ENCODE measurements at regions of chr6 and their contacts with region 1.

Region 1: GRCh38 chr6:27838058-27838944 is 73.9 kb downstream of the OR2B2 start:
- DNase-seq: peak; percentile 97
- H3K27ac ChIP-seq: peak overlapping the region; percentile 98
- CTCF ChIP-seq: no peak

Region 2: DNA sequence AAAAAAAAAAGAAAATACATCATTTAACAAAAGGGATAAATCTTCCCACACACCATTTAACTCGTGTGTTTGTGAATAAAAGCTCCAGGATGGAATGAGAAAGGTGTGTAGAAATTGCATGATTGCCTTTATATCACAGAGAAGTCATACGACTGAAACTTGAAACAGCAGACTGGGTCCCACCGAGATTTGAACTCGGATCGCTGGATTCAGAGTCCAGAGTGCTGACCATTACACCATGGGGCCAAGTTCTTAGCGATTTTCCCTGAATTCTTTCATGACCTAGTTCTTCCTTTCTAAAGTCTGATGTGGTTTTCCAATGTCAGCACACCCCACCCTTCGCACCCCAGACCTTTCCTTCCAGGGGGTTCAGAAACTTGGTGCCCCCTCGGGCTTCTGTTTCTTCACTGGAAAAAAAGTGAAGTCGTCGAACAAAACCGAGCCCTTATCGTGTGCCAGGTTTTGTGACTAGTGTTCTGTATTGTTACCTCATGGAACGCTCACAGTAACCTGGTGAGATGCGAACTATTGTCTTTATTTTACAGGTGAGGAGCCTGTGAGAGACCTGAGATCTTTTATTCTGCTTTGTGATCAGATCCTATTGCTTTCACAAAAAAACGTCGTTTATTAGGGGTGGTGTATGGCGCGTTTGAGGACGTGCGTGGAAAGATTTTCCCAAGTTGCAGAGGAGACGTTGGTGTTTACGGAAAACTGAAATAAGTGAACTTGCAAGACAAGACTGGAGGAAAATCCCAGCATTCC is 46.9 kb before region 1 on chr6:
- CTCF ChIA-PET with region 1: no interaction called
- POLR2A ChIA-PET with region 1: no interaction called
- DNase-seq: peak; percentile 44
- H3K27ac ChIP-seq: peak overlapping the region; percentile 76
- CTCF ChIP-seq: no peak

Region 3: DNA sequence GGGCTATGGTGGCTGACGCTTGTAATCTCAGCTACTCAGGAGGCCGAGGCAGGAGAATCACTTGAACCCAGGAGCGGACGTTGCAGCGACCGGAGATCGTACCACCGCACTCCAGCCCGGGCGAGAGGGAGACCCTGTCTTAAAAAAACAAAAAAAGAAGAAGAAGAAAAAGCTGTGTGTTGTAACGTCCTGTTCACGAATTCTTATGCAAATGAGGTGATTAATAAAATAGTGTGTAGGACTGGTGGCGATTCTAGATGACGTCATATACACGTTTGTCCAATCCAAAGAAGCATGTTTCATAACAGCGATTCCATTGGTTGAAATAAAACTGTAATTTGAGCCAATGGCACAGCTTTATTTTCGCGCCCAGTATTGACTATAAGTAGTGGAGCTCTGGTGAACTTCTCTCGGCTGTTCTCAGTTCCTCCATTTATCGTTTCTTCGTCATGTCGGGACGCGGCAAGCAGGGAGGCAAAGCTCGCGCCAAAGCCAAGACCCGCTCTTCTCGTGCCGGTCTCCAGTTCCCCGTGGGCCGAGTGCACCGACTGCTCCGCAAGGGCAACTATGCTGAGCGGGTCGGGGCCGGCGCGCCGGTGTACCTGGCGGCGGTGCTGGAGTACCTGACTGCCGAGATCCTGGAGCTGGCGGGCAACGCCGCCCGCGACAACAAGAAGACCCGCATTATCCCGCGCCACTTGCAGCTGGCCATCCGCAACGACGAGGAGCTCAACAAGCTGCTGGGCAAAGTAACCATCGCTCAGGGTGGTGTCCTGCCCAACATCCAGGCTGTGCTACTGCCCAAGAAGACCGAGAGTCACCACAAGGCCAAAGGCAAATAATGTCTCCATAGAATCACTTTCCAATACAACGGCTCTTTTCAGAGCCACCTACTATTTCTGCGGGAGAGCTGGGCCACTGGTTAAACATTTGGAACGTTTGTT is 26.9 kb after region 1 on chr6:
- CTCF ChIA-PET with region 1: interaction called, 4 read pairs
- POLR2A ChIA-PET with region 1: interaction called, 84 read pairs
- DNase-seq: peak; percentile 98
- H3K27ac ChIP-seq: peak overlapping the region; percentile 95
- CTCF ChIP-seq: no peak

Region 4: GRCh38 chr6:27871924-27872638 is 33.8 kb after region 1 on chr6:
- CTCF ChIA-PET with region 1: interaction called, 4 read pairs
- POLR2A ChIA-PET with region 1: interaction called, 84 read pairs
- DNase-seq: peak; percentile 97
- H3K27ac ChIP-seq: peak overlapping the region; percentile 96
- CTCF ChIP-seq: peak; percentile 18; the same call in 1 of the 2 replicates

Measured in RWPE1 (cell line).